ENCODE measurements at regions of chr5 and their contacts with region 1.

Region 1: DNA sequence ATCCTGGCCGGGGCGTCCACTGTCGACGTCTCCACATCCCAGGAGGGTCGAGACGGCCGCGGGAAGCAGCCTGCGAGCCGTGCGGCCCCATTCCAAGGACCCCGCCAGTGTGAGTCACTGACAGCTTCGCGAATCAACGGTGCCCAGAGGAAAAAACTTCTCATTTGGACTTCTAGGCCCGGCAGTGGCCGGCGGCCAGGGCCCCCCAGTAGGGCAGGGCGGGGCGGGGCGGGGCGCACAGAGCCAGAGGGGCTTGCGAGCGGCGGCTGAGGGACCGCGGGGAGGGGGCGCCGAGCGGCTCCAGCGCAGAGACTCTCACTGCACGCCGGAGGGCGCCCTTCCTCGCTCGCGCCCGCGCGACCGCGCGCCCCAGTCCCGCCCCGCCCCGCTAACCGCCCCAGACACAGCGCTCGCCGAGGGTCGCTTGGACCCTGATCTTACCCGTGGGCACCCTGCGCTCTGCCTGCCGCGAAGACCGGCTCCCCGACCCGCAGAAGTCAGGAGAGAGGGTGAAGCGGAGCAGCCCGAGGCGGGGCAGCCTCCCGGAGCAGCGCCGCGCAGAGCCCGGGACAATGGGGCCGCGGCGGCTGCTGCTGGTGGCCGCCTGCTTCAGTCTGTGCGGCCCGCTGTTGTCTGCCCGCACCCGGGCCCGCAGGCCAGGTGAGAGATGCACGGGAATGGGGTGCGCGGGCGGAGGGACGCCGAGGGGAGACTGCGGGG is at the start of gene F2R:
- DNase-seq: peak; percentile 48 to 66
- H3K4me3 ChIP-seq: peak within 1 kb of the TSS; percentile 94
- H3K4me3 Mint-ChIP-seq: peak within 1 kb of the TSS; percentile 89
- H3K27ac Mint-ChIP-seq: peak within 1 kb of the TSS; percentile 55
- H3K4me1 ChIP-seq: peaks cover 9% of the 10 kb centered on the region; the same call in 1 of the 2 replicates
- H3K4me1 Mint-ChIP-seq: peaks cover 7% of the 10 kb centered on the region
- H3K27me3 ChIP-seq: no peaks in the 10 kb centered on the region
- H3K27me3 Mint-ChIP-seq: no peaks in the 10 kb centered on the region
- CTCF ChIP-seq: peak; percentile 44 to 71
- total RNA-seq, gene F2R: 6.3 and 7.8 TPM in 2 replicates

Region 2: DNA sequence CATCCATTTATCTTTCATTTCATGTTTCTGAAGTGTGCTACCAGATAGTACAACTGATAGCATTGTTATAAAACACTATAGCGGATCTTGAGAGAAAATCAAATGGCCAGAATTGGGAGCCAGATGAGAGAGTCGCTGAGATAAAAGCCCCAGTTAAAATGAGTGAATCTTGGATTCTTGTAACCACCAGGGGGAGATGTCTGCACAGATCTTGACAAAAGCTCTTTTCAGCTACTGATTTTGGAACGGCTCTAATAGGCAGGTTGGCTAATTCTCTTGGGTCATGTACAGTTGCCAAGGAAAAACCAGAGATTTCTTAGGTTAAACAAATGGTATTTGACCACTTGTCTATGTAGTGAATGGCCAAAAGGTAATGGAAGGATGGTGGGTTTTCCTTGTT is 114.4 kb before region 1 on chr5:
- CTCF ChIA-PET with region 1: no interaction called
- POLR2A ChIA-PET with region 1: no interaction called
- intact Hi-C with region 1: loop called (anchors 1 kb)
- DNase-seq: peak in 1 of 2 experiments; percentile 62
- H3K4me3 ChIP-seq: no peak overlapping the region
- H3K4me3 Mint-ChIP-seq: no peak overlapping the region
- H3K27ac Mint-ChIP-seq: no peak overlapping the region
- H3K4me1 ChIP-seq: no peaks in the 10 kb centered on the region
- H3K4me1 Mint-ChIP-seq: peaks cover 9% of the 10 kb centered on the region
- H3K27me3 ChIP-seq: no peaks in the 10 kb centered on the region
- H3K27me3 Mint-ChIP-seq: no peaks in the 10 kb centered on the region
- CTCF ChIP-seq: peak; percentile 70 to 82

Region 3: DNA sequence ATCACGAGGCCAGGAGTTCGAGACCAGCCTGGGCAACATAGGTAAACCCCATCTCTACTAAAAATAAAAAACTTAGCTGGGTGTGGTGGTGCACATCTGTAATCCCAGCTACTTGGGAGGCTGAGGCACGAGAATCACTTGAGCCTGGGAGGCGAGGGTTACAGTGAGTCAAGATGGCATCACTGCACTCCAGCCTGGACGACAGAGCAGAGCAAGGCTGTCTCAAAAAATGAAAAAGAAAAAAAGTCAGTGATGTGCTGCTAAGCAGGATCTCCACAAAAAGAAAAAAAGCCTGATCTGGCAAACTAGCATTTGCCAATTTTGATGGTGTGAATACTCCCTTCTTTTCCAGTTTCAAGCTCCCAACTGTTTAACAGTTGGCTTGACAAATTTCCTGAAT is 21.9 kb after region 1 on chr5:
- CTCF ChIA-PET with region 1: no interaction called
- POLR2A ChIA-PET with region 1: no interaction called
- intact Hi-C with region 1: loop called (anchors 2 kb)
- DNase-seq: no peak
- H3K4me3 ChIP-seq: no peak overlapping the region
- H3K4me3 Mint-ChIP-seq: no peak overlapping the region
- H3K27ac Mint-ChIP-seq: no peak overlapping the region
- H3K4me1 ChIP-seq: peaks cover 13% of the 10 kb centered on the region
- H3K4me1 Mint-ChIP-seq: peaks cover 5% of the 10 kb centered on the region
- H3K27me3 ChIP-seq: no peaks in the 10 kb centered on the region
- H3K27me3 Mint-ChIP-seq: no peaks in the 10 kb centered on the region
- CTCF ChIP-seq: no peak

Region 4: DNA sequence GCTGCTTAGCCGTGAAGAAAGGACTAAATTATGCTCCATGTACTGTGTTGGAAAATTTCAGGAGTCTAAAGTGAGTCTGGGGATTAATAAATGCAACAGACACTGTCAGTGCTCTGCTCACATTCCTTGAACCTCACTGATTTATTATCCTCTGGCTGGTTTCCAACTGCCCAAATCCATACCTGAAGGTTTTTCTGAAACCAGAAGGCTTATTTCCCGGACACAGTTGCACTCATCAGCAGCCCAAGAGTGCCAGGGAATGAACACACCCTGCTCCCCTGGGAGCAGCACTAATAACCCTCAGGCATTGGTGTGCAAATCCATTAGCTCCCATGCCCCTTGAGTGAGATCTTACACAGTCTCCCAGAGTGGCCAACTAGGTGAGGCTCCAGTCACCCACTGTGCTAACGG is 38.8 kb after region 1 on chr5:
- CTCF ChIA-PET with region 1: no interaction called
- POLR2A ChIA-PET with region 1: no interaction called
- intact Hi-C with region 1: loop called (anchors 5 kb)
- DNase-seq: no peak
- H3K4me3 ChIP-seq: no peak overlapping the region
- H3K4me3 Mint-ChIP-seq: no peak overlapping the region
- H3K27ac Mint-ChIP-seq: no peak overlapping the region
- H3K4me1 ChIP-seq: peaks cover 27% of the 10 kb centered on the region
- H3K4me1 Mint-ChIP-seq: peaks cover 14% of the 10 kb centered on the region
- H3K27me3 ChIP-seq: no peaks in the 10 kb centered on the region
- H3K27me3 Mint-ChIP-seq: no peaks in the 10 kb centered on the region
- CTCF ChIP-seq: no peak

Region 5: DNA sequence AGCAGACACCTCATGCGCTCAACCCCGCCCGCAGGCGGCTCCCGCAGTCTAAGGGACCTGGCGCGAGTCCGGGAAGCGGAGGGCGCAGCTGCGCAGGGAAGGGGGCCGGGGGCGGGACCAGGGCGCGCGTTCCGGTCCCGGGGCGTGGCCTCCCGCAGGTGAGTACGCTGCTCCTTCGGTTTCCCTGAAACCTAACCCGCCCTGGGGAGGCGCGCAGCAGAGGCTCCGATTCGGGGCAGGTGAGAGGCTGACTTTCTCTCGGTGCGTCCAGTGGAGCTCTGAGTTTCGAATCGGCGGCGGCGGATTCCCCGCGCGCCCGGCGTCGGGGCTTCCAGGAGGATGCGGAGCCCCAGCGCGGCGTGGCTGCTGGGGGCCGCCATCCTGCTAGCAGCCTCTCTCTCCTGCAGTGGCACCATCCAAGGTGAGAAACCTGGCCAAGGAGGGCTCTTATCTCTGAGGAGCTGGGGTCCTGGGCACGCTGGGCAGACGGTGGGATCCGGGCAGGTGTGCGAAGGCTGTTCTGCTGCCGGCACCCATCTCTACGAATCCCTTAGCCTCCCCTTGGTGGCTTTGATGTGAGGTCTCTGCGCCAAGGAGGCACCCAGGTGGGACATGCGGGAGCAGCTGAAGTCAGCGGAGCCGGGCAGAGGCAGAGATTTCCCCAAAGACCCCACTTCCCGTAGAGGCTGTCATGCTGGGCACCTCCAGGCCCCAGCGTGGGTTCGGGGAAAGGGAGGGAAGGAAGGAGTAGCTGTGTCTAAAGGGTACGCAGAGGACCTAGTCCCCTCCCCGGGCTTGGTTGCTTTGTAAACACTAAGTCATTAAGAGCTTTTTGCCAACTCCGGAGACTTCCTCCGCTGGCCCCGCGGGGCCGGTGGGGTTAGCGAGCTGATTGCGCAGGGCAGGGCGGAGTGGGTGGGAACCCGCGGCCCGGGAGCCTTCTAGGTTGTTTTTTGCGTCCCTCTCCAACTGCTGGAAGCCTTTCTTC is 103.2 kb after region 1 on chr5 and contains the start of gene F2RL1:
- CTCF ChIA-PET with region 1: no interaction called
- POLR2A ChIA-PET with region 1: no interaction called
- intact Hi-C with region 1: loop called (anchors 5 kb)
- DNase-seq: peak; percentile 96 to 98
- H3K4me3 ChIP-seq: peak within 1 kb of the TSS; percentile 96
- H3K4me3 Mint-ChIP-seq: peak within 1 kb of the TSS; percentile 89
- H3K27ac Mint-ChIP-seq: peak within 1 kb of the TSS; percentile 95
- H3K4me1 ChIP-seq: peaks cover 40% of the 10 kb centered on the region
- H3K4me1 Mint-ChIP-seq: peaks cover 25% of the 10 kb centered on the region
- H3K27me3 ChIP-seq: no peaks in the 10 kb centered on the region
- H3K27me3 Mint-ChIP-seq: no peaks in the 10 kb centered on the region
- CTCF ChIP-seq: no peak
- total RNA-seq, gene F2RL1: 50.0 and 51.8 TPM in 2 replicates